IMR-90 (cell line): ENCODE measurements at regions of chr10 and their contacts with region 1.

Region 1: GRCh38 chr10:112949875-112950507 is at the start of gene TCF7L2:
- DNase-seq: peak; percentile 95
- ATAC-seq: peak; percentile 87
- H3K4me3 ChIP-seq: peak within 1 kb of the TSS; percentile 90
- H3K27ac ChIP-seq: peak within 1 kb of the TSS; percentile 99
- H3K4me1 ChIP-seq: peaks cover 2% of the 10 kb centered on the region; the same call in 1 of the 2 replicates
- H3K27me3 ChIP-seq: no peaks in the 10 kb centered on the region
- CTCF ChIP-seq: 0 out of 2 replicates have a peak, but pooled peaks have one; percentile 2
- POLR2A ChIP-seq: peak; percentile 80
- RAD21 ChIP-seq: peak; percentile 13; the same call in 1 of the 2 replicates
- total RNA-seq, gene TCF7L2: 1.3 and 1.7 TPM in 2 replicates

Region 2: DNA sequence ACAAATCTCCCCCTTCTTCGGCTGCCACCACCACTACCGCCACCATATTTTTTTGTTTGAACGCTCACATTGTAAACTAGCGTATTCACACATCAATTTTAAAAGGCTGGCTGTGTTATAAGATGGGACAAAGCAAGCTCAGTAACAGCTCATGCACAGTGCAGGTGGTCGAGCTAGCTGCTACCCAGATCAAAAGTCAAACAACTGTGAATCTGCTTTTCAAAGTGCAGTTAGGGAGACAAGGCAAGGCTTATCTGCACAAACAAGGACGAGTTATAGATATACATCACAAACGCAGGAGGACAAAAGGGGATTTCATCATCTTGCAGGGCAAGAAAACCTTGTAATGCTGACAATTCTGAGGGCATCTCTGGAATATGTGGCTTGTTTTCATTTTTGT is 271.4 kb before region 1 on chr10:
- CTCF ChIA-PET with region 1: no interaction called
- POLR2A ChIA-PET with region 1: no interaction called
- dilution Hi-C with region 1: no loop called
- in situ Hi-C with region 1: no loop called
- intact Hi-C with region 1: no loop called
- DNase-seq: no peak
- ATAC-seq: no peak
- H3K4me3 ChIP-seq: no peak overlapping the region
- H3K27ac ChIP-seq: no peak overlapping the region
- H3K4me1 ChIP-seq: peaks cover 4% of the 10 kb centered on the region; the same call in 1 of the 2 replicates
- H3K27me3 ChIP-seq: no peaks in the 10 kb centered on the region
- CTCF ChIP-seq: no peak
- POLR2A ChIP-seq: no peak
- RAD21 ChIP-seq: no peak

Region 3: GRCh38 chr10:112721080-112721698 is 228.8 kb before region 1 on chr10:
- CTCF ChIA-PET with region 1: no interaction called
- POLR2A ChIA-PET with region 1: interaction called, 11 read pairs
- dilution Hi-C with region 1: no loop called
- in situ Hi-C with region 1: no loop called
- intact Hi-C with region 1: loop called (anchors 1 kb)
- DNase-seq: peak; percentile 53
- ATAC-seq: peak; percentile 65; the same call in 1 of the 2 replicates
- H3K4me3 ChIP-seq: no peak overlapping the region
- H3K27ac ChIP-seq: no peak overlapping the region
- H3K4me1 ChIP-seq: peaks cover 6% of the 10 kb centered on the region
- H3K27me3 ChIP-seq: no peaks in the 10 kb centered on the region
- CTCF ChIP-seq: peak; percentile 55
- POLR2A ChIP-seq: no peak
- RAD21 ChIP-seq: peak; percentile 59

Region 4: GRCh38 chr10:112811740-112812551 is 138.0 kb before region 1 on chr10:
- CTCF ChIA-PET with region 1: interaction called, 3 read pairs
- POLR2A ChIA-PET with region 1: no interaction called
- dilution Hi-C with region 1: no loop called
- in situ Hi-C with region 1: no loop called
- intact Hi-C with region 1: loop called (anchors 1 kb)
- DNase-seq: peak; percentile 94
- ATAC-seq: peak; percentile 85
- H3K4me3 ChIP-seq: peak overlapping the region; percentile 40
- H3K27ac ChIP-seq: peak overlapping the region; percentile 84
- H3K4me1 ChIP-seq: peaks cover 20% of the 10 kb centered on the region
- H3K27me3 ChIP-seq: no peaks in the 10 kb centered on the region
- CTCF ChIP-seq: no peak
- POLR2A ChIP-seq: no peak
- RAD21 ChIP-seq: no peak

Region 5: DNA sequence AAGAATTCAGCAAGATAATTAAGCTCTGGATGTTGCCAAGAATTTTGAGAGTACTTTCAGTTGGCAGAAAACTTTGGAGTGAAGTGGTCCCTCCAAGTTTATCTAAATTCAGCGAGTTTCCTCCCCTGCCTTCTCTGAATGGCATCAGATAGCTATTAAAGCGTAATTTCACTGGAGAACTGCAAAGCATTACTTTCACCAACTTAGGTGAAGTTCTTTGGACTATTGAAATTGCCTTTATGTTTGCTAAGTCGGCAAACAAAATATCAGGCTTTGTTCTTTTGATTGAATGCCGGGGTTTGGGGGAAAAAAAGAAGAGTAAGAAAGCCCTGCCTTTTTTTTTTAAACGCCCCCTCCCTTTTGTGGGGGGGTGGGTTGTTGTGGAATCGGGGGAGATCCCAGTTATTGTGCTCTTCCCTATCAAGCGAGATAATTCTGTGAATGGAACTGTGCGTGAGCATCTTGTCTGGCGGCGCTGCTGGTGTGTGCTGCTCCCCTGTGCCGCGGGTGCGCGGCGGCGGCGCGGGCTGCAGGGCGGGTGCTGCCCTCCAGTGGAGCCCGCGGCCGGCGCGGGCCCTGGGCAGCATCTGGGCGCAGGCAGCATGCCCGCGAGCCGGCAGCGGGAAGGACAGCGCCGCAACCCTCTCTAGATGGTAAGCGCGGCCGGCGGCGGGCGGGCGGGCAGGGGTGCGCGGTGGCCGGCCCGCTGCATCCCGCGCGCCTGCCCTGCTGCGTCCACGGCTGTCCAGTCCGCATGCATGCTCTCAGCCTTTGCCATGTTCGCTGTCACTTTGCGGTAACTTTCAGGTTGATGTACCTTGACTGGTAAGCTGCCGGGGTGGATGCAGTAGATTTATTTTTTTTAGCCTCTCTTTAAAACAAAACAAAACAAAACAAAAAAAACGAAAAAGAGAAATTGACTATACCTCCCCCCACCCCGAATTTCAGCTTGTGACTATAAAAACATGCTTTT is 176.5 kb after region 1 on chr10:
- CTCF ChIA-PET with region 1: no interaction called
- POLR2A ChIA-PET with region 1: no interaction called
- dilution Hi-C with region 1: no loop called
- in situ Hi-C with region 1: no loop called
- intact Hi-C with region 1: loop called (anchors 1 kb)
- DNase-seq: peak; percentile 76
- ATAC-seq: peak; percentile 99
- H3K4me3 ChIP-seq: peak overlapping the region; percentile 24; the same call in 1 of the 2 replicates
- H3K27ac ChIP-seq: no peak overlapping the region
- H3K4me1 ChIP-seq: peaks cover 2% of the 10 kb centered on the region; the same call in 1 of the 2 replicates
- H3K27me3 ChIP-seq: no peaks in the 10 kb centered on the region
- CTCF ChIP-seq: peak; percentile 95
- POLR2A ChIP-seq: 0 out of 2 replicates have a peak, but pooled peaks have one; percentile 32
- RAD21 ChIP-seq: peak; percentile 96

Region 6: GRCh38 chr10:113228530-113228929 is 278.5 kb after region 1 on chr10:
- CTCF ChIA-PET with region 1: no interaction called
- POLR2A ChIA-PET with region 1: no interaction called
- dilution Hi-C with region 1: no loop called
- in situ Hi-C with region 1: no loop called
- intact Hi-C with region 1: no loop called
- DNase-seq: peak; percentile 27
- ATAC-seq: no peak
- H3K4me3 ChIP-seq: no peak overlapping the region
- H3K27ac ChIP-seq: no peak overlapping the region
- H3K4me1 ChIP-seq: no peaks in the 10 kb centered on the region
- H3K27me3 ChIP-seq: peaks cover 14% of the 10 kb centered on the region
- CTCF ChIP-seq: no peak
- POLR2A ChIP-seq: no peak
- RAD21 ChIP-seq: no peak

Region 7: GRCh38 chr10:113493882-113494301 is 543.9 kb after region 1 on chr10:
- CTCF ChIA-PET with region 1: no interaction called
- POLR2A ChIA-PET with region 1: interaction called, 12 read pairs
- dilution Hi-C with region 1: no loop called
- in situ Hi-C with region 1: no loop called
- intact Hi-C with region 1: no loop called
- DNase-seq: no peak
- ATAC-seq: no peak
- H3K4me3 ChIP-seq: no peak overlapping the region
- H3K27ac ChIP-seq: no peak overlapping the region
- H3K4me1 ChIP-seq: no peaks in the 10 kb centered on the region
- H3K27me3 ChIP-seq: no peaks in the 10 kb centered on the region
- CTCF ChIP-seq: no peak
- POLR2A ChIP-seq: no peak
- RAD21 ChIP-seq: no peak